Activated B cell treated with CpG ODN at 0.5 μM for 24 hours (primary cell): ENCODE measurements at regions of chr1 and their contacts with region 1.

Region 1: GRCh38 chr1:247210376-247211117 is 38.7 kb upstream of the ZNF124 start:
- DNase-seq: peak; percentile 91
- ATAC-seq: peak; percentile 98
- H3K4me3 Mint-ChIP-seq: peak overlapping the region; percentile 95
- H3K27ac Mint-ChIP-seq: peak overlapping the region; percentile 94
- H3K4me1 Mint-ChIP-seq: peaks cover 63% of the 10 kb centered on the region
- H3K27me3 Mint-ChIP-seq: no peaks in the 10 kb centered on the region
- CTCF ChIP-seq: no peak

Region 2: DNA sequence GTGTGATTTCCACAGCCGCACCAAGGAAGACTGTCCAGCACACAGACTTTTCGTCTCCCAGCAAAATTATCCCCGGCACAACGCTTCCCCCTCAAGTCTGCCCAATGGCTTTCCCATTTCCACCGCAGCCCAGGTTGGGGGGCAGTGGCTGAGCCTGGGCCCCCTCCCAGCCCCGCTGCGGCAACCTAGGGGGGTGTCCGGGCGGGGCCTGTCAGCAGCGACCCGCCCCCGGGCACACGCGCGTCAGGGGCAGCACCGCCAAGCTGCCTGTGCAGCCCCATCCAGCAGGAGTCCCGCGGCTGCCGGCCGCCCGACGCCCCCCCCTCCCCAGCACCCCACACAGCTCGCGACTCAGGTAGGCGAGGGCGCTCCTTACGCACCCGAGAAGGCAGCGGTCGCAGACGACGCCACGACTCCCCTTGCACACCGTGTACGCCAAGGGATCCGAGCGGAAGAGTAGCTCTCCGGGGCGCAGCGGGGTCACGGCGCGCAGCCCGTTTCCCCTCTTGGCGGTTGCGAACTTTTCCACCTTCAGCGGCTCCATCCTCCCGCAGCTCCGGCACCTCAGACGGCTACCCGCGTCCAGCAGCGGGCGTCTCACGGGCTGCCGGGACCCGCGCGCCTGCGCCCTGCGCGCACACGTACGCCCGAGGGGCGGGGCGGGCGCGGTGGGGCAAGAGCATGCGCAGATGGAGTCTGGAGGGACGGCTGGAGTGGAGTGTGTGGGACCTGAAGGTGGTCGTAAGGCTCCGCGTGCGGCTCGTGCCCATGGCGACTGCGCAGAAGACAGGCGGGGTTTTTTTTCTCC is 703.7 kb before region 1 on chr1 and contains the start of gene SMYD3:
- CTCF ChIA-PET with region 1: no interaction called
- POLR2A ChIA-PET with region 1: no interaction called
- intact Hi-C with region 1: loop called (anchors 5 kb)
- DNase-seq: peak; percentile 67
- ATAC-seq: peak; percentile 93
- H3K4me3 Mint-ChIP-seq: peak within 1 kb of the TSS; percentile 93
- H3K27ac Mint-ChIP-seq: peak within 1 kb of the TSS; percentile 86
- H3K4me1 Mint-ChIP-seq: peaks cover 22% of the 10 kb centered on the region
- H3K27me3 Mint-ChIP-seq: no peaks in the 10 kb centered on the region
- CTCF ChIP-seq: no peak
- total RNA-seq, gene SMYD3: 18.3 and 20.8 TPM in 2 replicates

Region 3: DNA sequence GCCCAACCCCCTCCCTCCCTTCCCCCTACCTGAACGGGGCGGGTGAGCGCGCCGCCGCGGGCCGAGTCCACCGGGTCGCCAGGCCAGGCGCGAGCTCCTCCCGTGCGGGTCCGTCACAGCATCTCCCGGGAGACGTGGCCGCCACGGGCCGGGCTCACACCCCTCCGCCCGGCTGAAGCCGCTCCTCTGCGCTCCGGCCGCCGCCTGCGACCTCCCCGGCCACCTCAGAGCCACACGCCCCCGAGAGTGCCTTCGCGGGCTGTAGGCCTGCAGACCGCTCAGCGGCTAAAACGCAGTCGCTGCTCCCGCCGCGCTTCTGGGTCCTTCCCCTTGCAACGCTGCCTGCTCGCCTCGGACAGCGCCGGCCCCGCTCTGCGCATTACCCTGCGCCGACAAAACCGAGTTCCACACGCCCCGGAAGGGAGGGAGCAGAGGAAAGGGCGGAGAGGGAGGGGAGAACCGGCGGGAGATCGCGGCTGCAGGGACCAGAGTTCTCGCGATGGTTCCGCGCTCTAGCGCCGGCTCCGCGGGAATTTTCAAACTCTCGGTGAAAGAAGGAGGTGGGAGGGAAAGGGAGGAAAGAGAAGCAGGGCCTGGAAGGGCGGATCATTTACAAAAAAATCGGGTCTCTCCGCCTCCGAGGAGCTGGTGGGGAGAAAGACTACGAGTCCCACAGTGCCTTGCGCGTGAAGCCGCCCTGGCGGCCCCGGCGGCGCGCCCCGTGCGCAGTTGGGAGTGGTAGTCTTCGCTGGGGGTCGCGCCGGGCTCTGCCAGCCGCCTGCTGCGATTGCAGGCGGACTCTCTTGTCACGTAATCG is 278.8 kb before region 1 on chr1 and contains the start of gene AHCTF1:
- CTCF ChIA-PET with region 1: no interaction called
- POLR2A ChIA-PET with region 1: interaction called, 10 read pairs
- intact Hi-C with region 1: loop called (anchors 1 kb)
- DNase-seq: peak; percentile 87
- ATAC-seq: peak; percentile 88
- H3K4me3 Mint-ChIP-seq: peak within 1 kb of the TSS; percentile 92
- H3K27ac Mint-ChIP-seq: peak within 1 kb of the TSS; percentile 96
- H3K4me1 Mint-ChIP-seq: peaks cover 29% of the 10 kb centered on the region
- H3K27me3 Mint-ChIP-seq: no peaks in the 10 kb centered on the region
- CTCF ChIP-seq: no peak
- total RNA-seq, gene AHCTF1: 25.3 and 31.3 TPM in 2 replicates

Region 4: GRCh38 chr1:247103859-247104591 is 106.5 kb before region 1 on chr1 and contains the start of gene ZNF669:
- CTCF ChIA-PET with region 1: no interaction called
- POLR2A ChIA-PET with region 1: no interaction called
- intact Hi-C with region 1: loop called (anchors 1 kb)
- DNase-seq: peak; percentile 89
- ATAC-seq: peak; percentile 98
- H3K4me3 Mint-ChIP-seq: peak within 1 kb of the TSS; percentile 96
- H3K27ac Mint-ChIP-seq: peak within 1 kb of the TSS; percentile 90
- H3K4me1 Mint-ChIP-seq: peaks cover 21% of the 10 kb centered on the region
- H3K27me3 Mint-ChIP-seq: peaks cover 23% of the 10 kb centered on the region
- CTCF ChIP-seq: no peak
- total RNA-seq, gene ZNF669: 17.5 and 18.0 TPM in 2 replicates

Region 5: GRCh38 chr1:247316590-247317197 is 106.1 kb after region 1 on chr1:
- CTCF ChIA-PET with region 1: no interaction called
- POLR2A ChIA-PET with region 1: interaction called, 3 read pairs
- intact Hi-C with region 1: loop called (anchors 5 kb)
- DNase-seq: no peak
- ATAC-seq: peak; percentile 45
- H3K4me3 Mint-ChIP-seq: peak overlapping the region; percentile 53
- H3K27ac Mint-ChIP-seq: peak overlapping the region; percentile 70
- H3K4me1 Mint-ChIP-seq: peaks cover 31% of the 10 kb centered on the region
- H3K27me3 Mint-ChIP-seq: no peaks in the 10 kb centered on the region
- CTCF ChIP-seq: no peak

Region 6: GRCh38 chr1:247487057-247487456 is 276.5 kb after region 1 on chr1:
- CTCF ChIA-PET with region 1: no interaction called
- POLR2A ChIA-PET with region 1: no interaction called
- intact Hi-C with region 1: loop called (anchors 2 kb)
- DNase-seq: peak; percentile 17
- ATAC-seq: peak; percentile 81
- H3K4me3 Mint-ChIP-seq: no peak overlapping the region
- H3K27ac Mint-ChIP-seq: no peak overlapping the region
- H3K4me1 Mint-ChIP-seq: no peaks in the 10 kb centered on the region
- H3K27me3 Mint-ChIP-seq: peaks cover 6% of the 10 kb centered on the region
- CTCF ChIP-seq: peak; percentile 55